ENCODE measurements at regions of chr12 and their contacts with region 1.

Region 1: DNA sequence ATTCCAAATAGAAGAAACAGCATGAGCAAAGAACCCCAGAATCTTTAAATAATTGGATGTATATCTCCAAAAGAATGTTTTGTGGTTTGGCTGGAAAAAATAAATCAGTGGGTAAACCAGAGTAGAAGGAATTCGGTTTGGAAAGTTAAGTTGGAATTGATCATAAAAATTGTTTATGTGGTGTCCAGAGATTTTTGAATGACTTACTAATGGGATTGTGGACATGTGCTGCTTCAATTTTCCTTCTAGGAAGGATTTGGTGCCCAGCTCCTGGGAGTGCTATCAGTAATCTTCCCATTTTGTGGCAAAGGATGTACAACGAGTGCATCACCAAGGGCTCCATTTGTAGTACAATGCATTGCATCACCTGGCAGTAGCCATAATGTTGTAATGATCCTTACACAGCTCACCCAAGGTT is 224.8 kb downstream of the SLC16A7 start:
- DNase-seq: no peak
- ATAC-seq: no peak
- H3K4me3 ChIP-seq: no peak overlapping the region
- H3K27ac ChIP-seq: no peak overlapping the region
- H3K4me1 ChIP-seq: no peaks in the 10 kb centered on the region
- H3K27me3 ChIP-seq: no peaks in the 10 kb centered on the region
- CTCF ChIP-seq: no peak

Region 2: DNA sequence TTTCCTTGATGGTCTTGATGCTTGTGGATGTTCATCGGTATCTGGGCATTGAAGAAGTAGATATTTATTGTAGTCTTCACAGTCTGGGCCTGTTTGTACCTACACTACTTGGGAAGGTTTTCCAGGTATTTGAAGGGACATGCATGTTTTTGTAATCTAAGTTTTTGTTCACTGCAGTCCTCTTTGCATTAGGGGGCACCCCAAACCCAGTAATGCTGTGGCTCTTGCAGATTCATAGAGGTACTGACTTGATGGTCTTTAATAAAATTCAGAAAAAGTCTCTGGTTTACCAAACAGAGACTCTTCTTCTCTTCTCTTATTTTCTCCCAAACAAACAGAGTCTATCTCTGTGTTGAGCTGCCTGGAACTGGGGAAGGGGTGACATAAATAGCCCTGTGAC is 375.7 kb before region 1 on chr12:
- intact Hi-C with region 1: loop called in 1 of 10 experiments (anchors 10 kb)
- DNase-seq: no peak
- ATAC-seq: no peak
- H3K4me3 ChIP-seq: no peak overlapping the region
- H3K27ac ChIP-seq: no peak overlapping the region
- H3K4me1 ChIP-seq: no peaks in the 10 kb centered on the region
- H3K27me3 ChIP-seq: no peaks in the 10 kb centered on the region
- CTCF ChIP-seq: peak in 8 of 9 donors; percentile 17 to 58 (median 46)

Region 3: DNA sequence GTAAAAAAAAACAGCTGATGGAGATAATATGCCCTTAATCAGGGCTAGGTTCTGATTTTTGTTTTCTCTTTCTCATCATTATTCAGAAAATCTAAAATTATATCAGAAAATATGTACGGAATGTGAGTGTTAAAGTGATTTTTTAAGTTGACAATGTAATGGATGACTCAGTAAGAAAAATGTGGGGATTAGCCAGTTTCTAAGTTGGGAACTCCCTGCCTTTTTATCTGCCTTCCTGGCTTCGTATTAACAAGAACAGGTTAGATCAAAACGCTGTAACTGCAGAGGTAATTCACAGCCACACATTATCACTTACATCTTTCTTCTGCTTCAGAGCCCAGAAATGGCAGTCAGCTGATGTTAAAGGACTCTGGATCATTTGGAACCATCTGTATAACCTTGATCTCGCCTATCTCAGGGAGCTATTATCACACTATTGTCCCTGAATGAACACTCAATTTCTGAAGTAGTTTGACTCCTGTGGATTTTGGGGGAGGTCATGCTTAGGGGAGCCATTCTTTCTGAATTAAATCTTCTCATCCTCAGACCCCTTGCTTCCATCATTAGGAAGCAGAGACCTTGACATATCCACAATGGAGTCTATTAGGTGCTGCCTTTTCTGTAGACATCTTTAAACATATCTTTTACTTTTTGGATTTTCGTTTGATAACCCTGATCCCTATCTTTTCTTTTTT is 360.5 kb before region 1 on chr12:
- intact Hi-C with region 1: no loop called
- DNase-seq: no peak
- ATAC-seq: no peak
- H3K4me3 ChIP-seq: no peak overlapping the region
- H3K27ac ChIP-seq: no peak overlapping the region
- H3K4me1 ChIP-seq: no peaks in the 10 kb centered on the region
- H3K27me3 ChIP-seq: no peaks in the 10 kb centered on the region
- CTCF ChIP-seq: no peak

Region 4: DNA sequence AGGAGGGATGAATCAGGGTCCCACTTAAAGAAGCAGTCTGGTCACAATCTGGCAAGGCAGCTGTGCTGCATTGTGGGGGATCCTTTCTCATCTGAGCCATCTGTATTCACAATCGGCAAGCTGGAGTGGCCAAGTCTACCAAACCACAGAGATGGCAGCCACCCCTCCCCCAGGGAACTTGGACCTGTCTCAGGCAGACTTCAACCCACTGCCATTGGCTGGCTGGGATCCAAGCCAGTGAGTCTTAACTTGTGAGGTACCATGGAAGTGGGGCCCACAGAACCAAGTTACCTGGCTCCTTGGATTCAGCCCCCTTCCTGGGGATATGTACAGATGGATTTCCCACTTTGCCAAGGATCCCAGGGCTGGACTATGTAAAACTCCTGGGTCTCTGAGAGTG is 28.0 kb before region 1 on chr12:
- intact Hi-C with region 1: no loop called
- DNase-seq: no peak
- ATAC-seq: peak in 3 of 8 donors; percentile 31 to 64 (median 39)
- H3K4me3 ChIP-seq: no peak overlapping the region
- H3K27ac ChIP-seq: no peak overlapping the region
- H3K4me1 ChIP-seq: peaks cover 0 to 8% (median 0%) of the 10 kb centered on the region in 9 donors
- H3K27me3 ChIP-seq: no peaks in the 10 kb centered on the region
- CTCF ChIP-seq: no peak

Region 5: DNA sequence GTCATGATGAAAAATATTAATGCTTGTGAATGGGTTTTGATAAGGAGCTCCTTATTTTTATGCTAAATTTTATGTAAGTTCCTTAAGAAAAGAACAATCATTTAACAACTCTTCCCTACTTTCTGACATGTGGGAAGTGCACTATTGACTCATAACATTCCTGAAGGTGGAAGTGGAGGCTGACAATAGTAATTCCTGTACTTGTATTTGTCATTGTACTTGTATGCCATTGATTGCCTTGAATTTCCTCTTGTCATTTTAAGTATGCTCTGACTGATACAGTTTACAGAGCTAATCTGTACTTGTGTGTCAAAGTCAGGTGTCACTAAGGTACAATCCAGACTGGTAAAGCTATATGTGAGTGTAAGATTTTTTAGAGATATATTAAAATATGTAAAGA is 215.2 kb after region 1 on chr12:
- intact Hi-C with region 1: no loop called
- DNase-seq: no peak
- ATAC-seq: no peak
- H3K4me3 ChIP-seq: no peak overlapping the region
- H3K27ac ChIP-seq: no peak overlapping the region
- H3K4me1 ChIP-seq: no peaks in the 10 kb centered on the region
- H3K27me3 ChIP-seq: no peaks in the 10 kb centered on the region
- CTCF ChIP-seq: no peak

Region 6: GRCh38 chr12:60184107-60184506 is 363.5 kb after region 1 on chr12:
- intact Hi-C with region 1: no loop called
- DNase-seq: no peak
- ATAC-seq: no peak
- H3K4me3 ChIP-seq: no peak overlapping the region
- H3K27ac ChIP-seq: no peak overlapping the region
- H3K4me1 ChIP-seq: no peaks in the 10 kb centered on the region
- H3K27me3 ChIP-seq: no peaks in the 10 kb centered on the region
- CTCF ChIP-seq: no peak

Measured in heart right ventricle (tissue), 16 donors.